ENCODE measurements at regions of chr6 and their contacts with region 1.

Region 1: GRCh38 chr6:12890171-12890790 is 173.7 kb downstream of the PHACTR1 start:
- DNase-seq: peak in 1 of 2 experiments; percentile 77
- H3K4me3 ChIP-seq: no peak overlapping the region
- H3K27ac ChIP-seq: no peak overlapping the region
- H3K4me1 ChIP-seq: peaks cover under 1 to 11% (median 8%) of the 10 kb centered on the region in 4 experiments; a peak in 4 of 7 replicates
- H3K27me3 ChIP-seq: no peaks in the 10 kb centered on the region
- CTCF ChIP-seq: peak; percentile 54 to 75 (median 54)
- EP300 ChIP-seq: no peak
- POLR2A ChIP-seq: no peak
- RAD21 ChIP-seq: peak; percentile 32 to 47; a peak in 3 of 4 replicates

Region 2: DNA sequence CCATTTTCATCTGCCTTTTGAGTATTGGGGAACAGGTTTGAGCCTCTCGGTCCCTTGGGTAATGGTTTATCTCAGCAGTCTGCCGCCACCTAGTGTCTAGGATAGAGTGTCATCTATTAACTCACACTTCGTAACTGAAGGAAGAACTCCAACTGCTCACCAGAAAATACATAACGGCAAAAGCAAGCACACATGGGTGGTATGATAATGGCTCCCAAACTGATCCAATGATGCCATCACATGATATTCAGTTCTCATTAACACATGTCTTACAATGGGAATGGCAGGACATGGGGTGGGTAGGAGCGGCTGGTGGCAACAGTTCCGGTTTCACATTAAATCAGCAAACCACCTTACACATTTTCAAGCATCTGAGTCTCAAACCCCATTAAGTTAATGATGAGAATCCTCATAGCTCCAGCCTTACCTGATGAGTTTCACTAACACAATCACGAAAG is 284.4 kb before region 1 on chr6:
- CTCF ChIA-PET with region 1: interaction called, 17 read pairs
- POLR2A ChIA-PET with region 1: no interaction called
- DNase-seq: peak in 1 of 2 experiments; percentile 55
- H3K4me3 ChIP-seq: no peak overlapping the region
- H3K27ac ChIP-seq: no peak overlapping the region
- H3K4me1 ChIP-seq: peaks cover 0 to 6% (median 1%) of the 10 kb centered on the region in 4 experiments; a peak in 2 of 7 replicates
- H3K27me3 ChIP-seq: no peaks in the 10 kb centered on the region
- CTCF ChIP-seq: peak in 2 of 3 experiments; percentile 75 to 81; a peak in 3 of 4 replicates
- EP300 ChIP-seq: no peak
- POLR2A ChIP-seq: no peak
- RAD21 ChIP-seq: peak; percentile 93

Region 3: GRCh38 chr6:12637960-12638641 is 252.2 kb before region 1 on chr6:
- CTCF ChIA-PET with region 1: interaction called, 58 read pairs
- POLR2A ChIA-PET with region 1: interaction called, 3 read pairs
- DNase-seq: peak; percentile 58 to 81
- H3K4me3 ChIP-seq: no peak overlapping the region
- H3K27ac ChIP-seq: no peak overlapping the region
- H3K4me1 ChIP-seq: no peaks in the 10 kb centered on the region
- H3K27me3 ChIP-seq: no peaks in the 10 kb centered on the region
- CTCF ChIP-seq: peak; percentile 72 to 93 (median 91)
- EP300 ChIP-seq: no peak
- POLR2A ChIP-seq: no peak
- RAD21 ChIP-seq: peak; percentile 96 to 97

Region 4: GRCh38 chr6:12818324-12818723 is 72.0 kb before region 1 on chr6:
- CTCF ChIA-PET with region 1: no interaction called
- POLR2A ChIA-PET with region 1: no interaction called
- DNase-seq: no peak
- H3K4me3 ChIP-seq: no peak overlapping the region
- H3K27ac ChIP-seq: no peak overlapping the region
- H3K4me1 ChIP-seq: no peaks in the 10 kb centered on the region
- H3K27me3 ChIP-seq: no peaks in the 10 kb centered on the region
- CTCF ChIP-seq: no peak
- EP300 ChIP-seq: no peak
- POLR2A ChIP-seq: no peak
- RAD21 ChIP-seq: no peak

Region 5: GRCh38 chr6:12875051-12875450 is 15.2 kb before region 1 on chr6:
- CTCF ChIA-PET with region 1: interaction called, 10 read pairs
- POLR2A ChIA-PET with region 1: interaction called, 4 read pairs
- DNase-seq: no peak
- H3K4me3 ChIP-seq: no peak overlapping the region
- H3K27ac ChIP-seq: no peak overlapping the region
- H3K4me1 ChIP-seq: peaks cover 0 to 6% (median 2%) of the 10 kb centered on the region in 4 experiments; a peak in 2 of 7 replicates
- H3K27me3 ChIP-seq: no peaks in the 10 kb centered on the region
- CTCF ChIP-seq: no peak
- EP300 ChIP-seq: no peak
- POLR2A ChIP-seq: no peak
- RAD21 ChIP-seq: no peak

Measured in H1 (cell line).